Posterior vena cava (tissue), 2 donors: ENCODE measurements at regions of chr10 and their contacts with region 1.

Region 1: DNA sequence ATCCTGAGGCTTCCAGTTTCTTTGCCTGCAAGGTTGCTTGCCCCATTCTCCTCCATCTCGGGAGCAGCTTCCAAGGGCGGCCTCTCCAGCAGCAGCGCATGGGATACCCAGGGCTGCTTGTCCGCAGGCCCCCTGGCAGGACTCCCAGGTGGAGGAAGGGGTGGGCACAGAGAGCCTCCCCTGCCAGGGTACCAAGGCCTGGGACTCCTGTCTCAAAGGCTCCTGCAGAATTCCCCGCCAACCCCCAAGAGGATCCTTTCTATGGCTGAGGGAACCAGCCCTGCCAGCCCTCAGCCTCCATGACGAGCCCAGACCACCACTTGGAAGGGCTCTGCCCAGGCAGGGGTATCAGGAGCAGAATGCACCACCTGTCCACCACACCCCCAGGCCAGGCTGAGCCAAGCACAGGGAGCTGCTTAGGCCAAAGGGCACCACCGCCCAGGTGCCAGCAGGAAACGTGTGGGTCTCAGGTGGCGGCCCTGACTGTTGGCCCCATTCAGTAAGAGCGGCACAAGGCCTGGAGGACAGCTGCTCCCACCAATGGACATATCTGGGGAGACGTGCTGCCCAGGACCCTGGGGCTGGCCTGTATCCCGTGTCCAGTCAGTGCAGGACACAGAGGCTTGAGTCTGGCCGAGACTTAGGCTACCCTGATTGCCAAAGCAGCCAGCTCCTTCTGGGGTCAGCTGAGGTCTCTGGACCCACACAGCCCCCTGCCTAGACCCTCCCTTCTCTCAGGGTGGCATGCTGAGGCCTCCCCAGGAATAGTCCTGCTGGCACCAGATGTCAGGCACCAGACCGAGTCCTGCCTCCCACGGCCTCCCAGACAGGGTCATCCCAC is 33.8 kb upstream of the INPP5A start:
- DNase-seq: peak; percentile 22

Region 2: GRCh38 chr10:132464253-132465192 is 39.3 kb before region 1 on chr10:
- intact Hi-C with region 1: loop called in 1 of 2 experiments (anchors 5 kb)
- DNase-seq: peak; percentile 97

Region 3: DNA sequence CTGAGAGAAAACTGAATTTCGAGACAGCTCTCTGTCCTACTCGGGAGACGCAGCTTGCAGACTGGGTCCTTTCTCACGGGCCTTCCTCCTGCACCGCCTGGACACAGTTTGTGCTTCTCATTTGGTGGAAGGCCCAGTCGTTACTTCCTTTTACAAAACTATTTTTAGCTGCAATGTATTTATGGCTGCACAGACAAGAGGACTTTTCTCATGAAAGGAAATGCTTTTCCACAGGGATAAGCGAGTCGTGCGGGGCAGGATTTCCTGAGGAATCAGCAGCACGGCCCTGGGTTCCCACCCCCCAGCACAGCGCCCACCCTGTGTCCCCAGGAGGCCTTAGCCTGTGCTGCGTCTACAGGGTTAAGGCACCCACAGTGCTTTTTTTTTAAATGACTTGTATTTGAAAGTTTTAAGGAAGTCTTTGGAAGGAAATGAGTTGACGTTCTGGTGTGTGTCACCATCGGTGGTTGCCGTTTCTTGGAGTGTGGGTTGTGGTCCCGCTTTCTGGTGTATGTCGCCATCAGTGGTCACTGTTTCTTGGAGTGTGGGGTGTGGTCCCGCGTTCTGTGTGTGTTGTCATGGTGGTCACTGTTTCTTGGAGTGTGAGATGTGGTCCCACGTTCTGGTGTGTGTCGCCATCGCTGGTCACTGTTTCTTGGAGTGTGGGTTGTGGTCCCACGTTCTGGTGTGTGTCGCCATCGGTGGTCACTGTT is 84.7 kb after region 1 on chr10:
- intact Hi-C with region 1: no loop called
- DNase-seq: no peak